Left cardiac atrium (tissue), 4 donors: ENCODE measurements at regions of chr20 and their contacts with region 1.

Region 1: DNA sequence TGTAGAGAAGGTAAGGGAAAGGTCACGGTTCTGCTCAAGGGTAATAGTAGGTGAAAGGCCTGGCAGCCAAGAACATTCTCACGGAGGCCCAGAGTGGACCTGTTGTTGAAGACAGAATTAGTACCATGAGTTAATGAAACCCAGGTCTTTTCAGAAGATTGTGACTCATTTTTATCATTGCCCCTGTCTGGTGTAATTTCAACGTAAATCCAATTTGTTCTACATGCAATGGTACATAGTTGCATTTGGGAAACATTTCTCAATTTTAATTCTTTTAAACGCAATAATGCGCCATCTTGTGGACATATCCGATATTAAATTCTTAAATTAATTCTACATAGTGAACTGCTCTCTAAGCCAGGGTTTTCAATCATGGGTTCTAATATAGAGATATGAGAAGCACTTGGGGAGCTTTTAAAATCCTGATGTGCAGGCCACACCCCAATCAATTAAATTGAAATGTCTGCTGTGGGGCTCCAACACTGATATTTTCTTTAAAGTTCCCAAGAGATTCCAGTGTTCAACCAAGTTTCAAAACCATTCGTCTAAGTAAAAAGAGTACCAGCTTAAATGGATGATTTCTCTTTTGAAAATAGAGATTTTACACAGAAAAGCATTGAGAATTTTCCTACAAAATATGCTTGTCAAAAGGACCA is 257.4 kb downstream of the PLCB1 start:
- DNase-seq: no peak
- ATAC-seq: peak; percentile 49 to 58

Region 2: DNA sequence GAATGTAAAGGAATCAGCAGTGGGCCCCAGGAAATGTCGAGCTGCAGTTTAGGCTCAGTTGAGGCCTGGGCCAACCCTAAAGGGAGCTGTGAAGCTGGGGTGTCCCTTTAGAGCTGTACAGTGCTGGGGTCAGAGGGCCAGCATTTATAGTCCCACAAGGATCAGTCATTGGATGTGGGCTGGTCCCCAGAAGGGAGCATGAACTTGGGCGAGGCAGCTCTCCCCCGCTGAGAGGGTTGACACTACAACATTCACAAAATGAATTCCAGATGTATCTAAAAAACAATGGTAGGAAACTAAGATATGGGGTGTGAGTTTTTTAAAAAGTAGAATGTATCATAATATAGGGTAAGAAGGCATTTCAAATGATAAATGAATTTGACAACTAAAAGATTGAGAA is 340.2 kb before region 1 on chr20:
- intact Hi-C with region 1: loop called in 1 of 2 experiments (anchors 5 kb)
- DNase-seq: no peak
- ATAC-seq: no peak

Region 3: GRCh38 chr20:8443464-8444072 is 54.1 kb after region 1 on chr20:
- intact Hi-C with region 1: no loop called
- DNase-seq: no peak
- ATAC-seq: no peak

Region 4: DNA sequence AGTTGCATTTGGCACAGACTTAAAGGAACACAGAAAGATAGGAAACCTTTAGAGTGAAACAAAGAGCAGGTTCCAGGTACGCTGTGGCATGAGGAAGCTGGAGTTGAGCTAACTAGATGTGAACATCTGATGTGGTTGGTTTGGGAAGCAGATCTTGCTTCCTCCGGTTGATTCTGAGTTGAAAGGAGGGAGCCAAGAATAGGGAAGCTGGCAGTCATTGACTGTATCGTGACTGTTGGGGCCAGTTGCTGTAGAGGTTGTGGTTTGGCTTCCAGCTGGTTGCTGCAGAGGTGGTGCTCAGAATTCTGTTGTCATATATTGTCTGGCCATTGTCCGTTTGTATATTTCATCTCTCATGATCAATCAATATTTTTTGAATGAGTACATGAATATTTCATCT is 68.5 kb after region 1 on chr20:
- intact Hi-C with region 1: loop called in 1 of 2 experiments (anchors 2 kb)
- DNase-seq: no peak
- ATAC-seq: no peak